Tibial artery (tissue), 4 donors: ENCODE measurements at regions of chr11 and their contacts with region 1.

Region 1: DNA sequence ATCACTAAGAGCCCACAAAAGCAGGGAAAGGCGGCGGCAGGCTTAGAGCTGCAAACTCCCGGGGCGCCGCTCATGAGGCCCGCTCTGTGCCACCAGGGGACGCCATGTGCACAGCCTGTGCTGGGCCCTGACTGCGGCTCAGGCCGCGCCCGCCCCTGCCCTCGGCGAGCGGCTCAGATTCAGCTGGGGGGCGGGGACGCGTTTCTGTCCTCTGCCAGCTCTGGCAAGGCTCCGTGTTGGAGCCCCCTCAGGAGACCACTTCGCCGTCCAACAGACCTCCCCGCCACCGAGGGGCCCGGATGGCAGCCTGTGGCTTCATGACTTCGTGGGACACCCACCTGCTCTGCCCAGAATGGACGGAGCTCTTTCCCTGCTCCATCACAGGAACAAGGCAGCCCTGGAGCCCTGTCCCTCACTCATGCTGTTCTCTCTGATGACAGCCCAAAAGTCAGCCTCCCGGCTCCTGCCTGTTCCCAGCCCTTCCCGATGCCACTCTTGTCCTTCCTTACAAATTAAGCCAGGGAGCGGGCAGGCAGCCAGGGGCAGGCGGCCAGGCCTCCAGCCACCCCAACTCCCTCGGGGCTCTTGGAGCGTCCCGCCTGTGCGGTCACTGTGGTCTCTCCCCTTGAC is 69.1 kb downstream of the NAT10 start:
- DNase-seq: peak; percentile 82 to 90
- H3K4me3 ChIP-seq: peak overlapping the region; percentile 26 to 47
- H3K27ac ChIP-seq: peak overlapping the region; percentile 33 to 54
- H3K4me1 ChIP-seq: peaks cover 0 to 13% (median 8%) of the 10 kb centered on the region in 4 donors
- H3K27me3 ChIP-seq: no peaks in the 10 kb centered on the region
- CTCF ChIP-seq: peak; percentile 97 to 98

Region 2: DNA sequence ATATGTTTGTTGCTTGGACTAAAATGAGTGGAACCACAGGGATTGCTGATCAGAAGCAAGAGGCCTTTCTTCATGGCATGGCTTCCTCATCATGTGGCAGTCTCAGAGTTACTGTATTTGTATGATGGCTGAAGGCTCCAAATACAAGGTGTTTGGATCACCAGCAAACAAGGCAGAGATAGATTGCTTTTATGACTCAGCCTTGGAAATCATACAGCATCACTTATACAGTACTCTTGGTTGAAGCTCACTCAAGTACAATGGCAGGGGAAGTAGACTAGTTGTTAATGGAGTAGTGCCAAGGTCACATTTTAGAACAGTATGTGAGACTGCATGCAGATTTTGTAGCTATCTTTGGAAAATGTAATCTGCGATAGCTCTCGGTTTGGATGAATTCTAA is 106.4 kb before region 1 on chr11:
- intact Hi-C with region 1: no loop called
- DNase-seq: no peak
- H3K4me3 ChIP-seq: no peak overlapping the region
- H3K27ac ChIP-seq: no peak overlapping the region
- H3K4me1 ChIP-seq: peaks cover 0 to 52% (median 12%) of the 10 kb centered on the region in 4 donors
- H3K27me3 ChIP-seq: no peaks in the 10 kb centered on the region
- CTCF ChIP-seq: no peak

Region 3: GRCh38 chr11:34492806-34493414 is 318.4 kb after region 1 on chr11:
- intact Hi-C with region 1: loop called (anchors 5 kb)
- DNase-seq: peak in 1 of 2 donors; percentile 79
- H3K4me3 ChIP-seq: no peak overlapping the region
- H3K27ac ChIP-seq: no peak overlapping the region
- H3K4me1 ChIP-seq: no peaks in the 10 kb centered on the region
- H3K27me3 ChIP-seq: peaks cover 0 to 16% of the 10 kb centered on the region in 2 donors
- CTCF ChIP-seq: peak; percentile 43 to 56